ENCODE measurements at regions of chr19 and their contacts with region 1.

Region 1: GRCh38 chr19:45782820-45783785 is 813 bp upstream of the DMPK start:
- DNase-seq: peak; percentile 73 to 77
- H3K4me3 ChIP-seq: peak overlapping the region; percentile 51; the same call in 1 of the 2 replicates
- H3K27ac ChIP-seq: peak overlapping the region; percentile 81
- H3K4me1 ChIP-seq: peaks cover 55% of the 10 kb centered on the region
- H3K27me3 ChIP-seq: no peaks in the 10 kb centered on the region
- CTCF ChIP-seq: no peak; the same call in 1 of the 2 replicates

Region 2: GRCh38 chr19:45692187-45693105 is 90.7 kb before region 1 on chr19 and contains the start of gene QPCTL:
- CTCF ChIA-PET with region 1: interaction called, 14 read pairs
- POLR2A ChIA-PET with region 1: no interaction called
- intact Hi-C with region 1: no loop called
- DNase-seq: peak; percentile 97 to 100
- H3K4me3 ChIP-seq: peak within 1 kb of the TSS; percentile 80
- H3K27ac ChIP-seq: peak within 1 kb of the TSS; percentile 72
- H3K4me1 ChIP-seq: peaks cover 11% of the 10 kb centered on the region
- H3K27me3 ChIP-seq: no peaks in the 10 kb centered on the region
- CTCF ChIP-seq: no peak
- total RNA-seq, gene QPCTL: 27.6 and 42.8 TPM in 2 replicates

Region 3: DNA sequence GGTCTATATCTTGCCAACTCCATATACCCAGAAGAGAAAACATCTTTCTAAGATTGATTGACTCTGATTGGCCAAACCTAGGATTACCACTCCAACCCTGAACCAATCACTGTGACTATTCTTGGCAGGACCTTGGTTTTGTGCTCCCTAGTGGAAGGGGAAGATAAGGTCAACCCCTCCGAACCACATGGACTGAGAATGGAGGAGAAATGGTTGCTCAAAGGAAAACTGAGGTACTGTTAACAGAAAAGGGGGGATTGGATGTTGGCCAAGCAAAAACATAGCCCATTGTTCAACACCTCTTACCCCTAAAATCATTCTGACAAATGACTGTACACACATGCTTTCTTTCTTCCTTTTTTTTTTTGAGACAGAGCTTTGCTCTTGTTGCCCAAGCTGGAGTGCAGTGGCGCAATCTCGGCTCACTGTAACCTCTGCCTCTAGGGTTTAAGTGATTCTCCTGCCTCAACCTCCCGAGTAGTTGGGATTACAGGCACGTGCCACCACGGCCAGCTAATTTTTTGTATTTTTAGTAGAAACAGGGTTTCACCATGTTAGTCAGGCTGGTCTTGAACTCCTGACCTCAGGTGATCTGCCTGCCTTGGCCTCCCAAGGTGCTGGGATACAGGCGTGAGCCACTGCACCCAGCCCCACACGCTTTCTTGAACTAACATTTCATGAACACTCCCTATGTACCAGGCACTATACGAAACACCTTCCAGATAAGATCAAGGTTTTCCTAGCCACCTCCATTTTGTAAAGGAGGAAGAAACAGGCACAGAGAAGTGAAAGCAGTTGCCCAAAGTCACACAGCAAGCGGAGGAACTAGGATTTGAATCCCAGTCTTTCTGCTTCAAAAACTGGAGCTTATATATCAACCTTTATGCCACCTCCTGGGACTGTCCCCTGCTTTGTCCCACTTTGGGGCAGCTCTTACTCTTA is 43.3 kb before region 1 on chr19:
- CTCF ChIA-PET with region 1: no interaction called
- POLR2A ChIA-PET with region 1: interaction called, 10 read pairs
- intact Hi-C with region 1: no loop called
- DNase-seq: no peak
- H3K4me3 ChIP-seq: no peak overlapping the region
- H3K27ac ChIP-seq: no peak overlapping the region
- H3K4me1 ChIP-seq: peaks cover 4% of the 10 kb centered on the region; the same call in 1 of the 2 replicates
- H3K27me3 ChIP-seq: no peaks in the 10 kb centered on the region
- CTCF ChIP-seq: no peak

Region 4: GRCh38 chr19:45817010-45817724 is 34.1 kb after region 1 on chr19:
- CTCF ChIA-PET with region 1: interaction called, 16 read pairs
- POLR2A ChIA-PET with region 1: no interaction called
- intact Hi-C with region 1: no loop called
- DNase-seq: peak; percentile 86 to 95
- H3K4me3 ChIP-seq: no peak overlapping the region
- H3K27ac ChIP-seq: no peak overlapping the region
- H3K4me1 ChIP-seq: no peaks in the 10 kb centered on the region
- H3K27me3 ChIP-seq: no peaks in the 10 kb centered on the region
- CTCF ChIP-seq: peak; percentile 99

Region 5: GRCh38 chr19:45955905-45956608 is 173.0 kb after region 1 on chr19:
- CTCF ChIA-PET with region 1: no interaction called
- POLR2A ChIA-PET with region 1: interaction called, 12 read pairs
- intact Hi-C with region 1: no loop called
- DNase-seq: peak; percentile 66 to 80
- H3K4me3 ChIP-seq: peak overlapping the region; percentile 30; the same call in 1 of the 2 replicates
- H3K27ac ChIP-seq: peak overlapping the region; percentile 59; the same call in 1 of the 2 replicates
- H3K4me1 ChIP-seq: peaks cover 23% of the 10 kb centered on the region
- H3K27me3 ChIP-seq: peaks cover 20% of the 10 kb centered on the region
- CTCF ChIP-seq: no peak

Region 6: GRCh38 chr19:45968626-45969025 is 185.5 kb after region 1 on chr19:
- CTCF ChIA-PET with region 1: no interaction called
- POLR2A ChIA-PET with region 1: no interaction called
- intact Hi-C with region 1: no loop called
- DNase-seq: no peak
- H3K4me3 ChIP-seq: no peak overlapping the region
- H3K27ac ChIP-seq: no peak overlapping the region
- H3K4me1 ChIP-seq: no peaks in the 10 kb centered on the region
- H3K27me3 ChIP-seq: peaks cover 88% of the 10 kb centered on the region
- CTCF ChIP-seq: no peak